ENCODE measurements at regions of chr20 and their contacts with region 1.

Region 1: GRCh38 chr20:50233721-50234135 is 43.1 kb downstream of the CEBPB start:
- DNase-seq: no peak
- H3K4me3 ChIP-seq: no peak overlapping the region
- H3K27ac ChIP-seq: no peak overlapping the region
- H3K4me1 ChIP-seq: peaks cover 14% of the 10 kb centered on the region
- H3K27me3 ChIP-seq: no peaks in the 10 kb centered on the region
- CTCF ChIP-seq: no peak

Region 2: GRCh38 chr20:50153485-50154377 is 80.0 kb before region 1 on chr20 and contains the start of gene PEDS1:
- CTCF ChIA-PET with region 1: no interaction called
- dilution Hi-C with region 1: no loop called
- in situ Hi-C with region 1: no loop called
- intact Hi-C with region 1: no loop called
- DNase-seq: peak; percentile 91
- H3K4me3 ChIP-seq: peak within 1 kb of the TSS; percentile 80 to 94 (median 90)
- H3K27ac ChIP-seq: peak within 1 kb of the TSS; percentile 89
- H3K4me1 ChIP-seq: peaks cover 39% of the 10 kb centered on the region
- H3K27me3 ChIP-seq: no peaks in the 10 kb centered on the region
- CTCF ChIP-seq: no peak
- total RNA-seq, gene PEDS1: 28.8 to 29.5 TPM

Region 3: DNA sequence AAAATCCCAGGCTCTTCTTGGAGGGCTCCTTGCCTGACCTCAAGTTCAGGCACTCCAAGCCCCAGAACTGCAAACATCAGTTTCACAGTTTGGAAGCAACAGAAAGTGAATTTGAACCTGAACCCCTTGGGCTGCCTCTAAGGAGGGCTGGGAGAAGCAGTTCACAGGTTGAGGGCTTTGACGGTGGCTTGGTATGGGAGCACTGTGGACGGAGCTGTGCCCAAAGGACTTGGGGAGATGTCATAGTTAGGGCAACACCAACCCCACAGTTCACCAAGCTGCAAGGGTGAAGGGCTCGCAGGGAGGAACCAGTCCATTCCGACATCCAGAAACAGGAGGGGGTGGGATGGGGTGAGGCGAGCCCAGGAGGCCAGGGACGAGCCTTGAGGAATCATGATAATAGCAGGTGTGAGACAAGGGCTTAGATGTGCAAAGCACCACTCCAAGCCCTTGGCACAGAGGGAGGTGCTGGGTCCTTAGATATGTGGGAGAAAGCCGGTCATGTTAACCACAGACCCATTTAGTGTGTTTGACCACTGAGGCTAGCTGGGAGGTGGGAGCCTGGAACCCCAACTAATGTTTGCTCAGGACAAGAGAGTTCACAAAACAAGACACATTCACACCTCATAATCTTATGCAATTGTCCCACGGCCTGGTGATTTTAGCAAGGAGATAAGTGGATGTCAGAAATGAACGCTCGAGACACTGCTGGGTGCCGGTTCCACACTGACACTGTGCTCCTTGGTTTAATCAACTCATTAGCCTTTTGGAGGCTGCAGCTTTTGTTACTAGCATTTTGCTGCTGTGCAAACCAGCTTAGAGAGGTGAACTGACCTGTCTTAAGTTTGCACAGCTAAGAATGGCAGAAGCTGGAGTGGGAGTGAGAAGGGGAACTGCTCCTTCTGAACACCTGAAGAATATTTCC is 38.6 kb before region 1 on chr20:
- CTCF ChIA-PET with region 1: no interaction called
- dilution Hi-C with region 1: loop called (anchors 5 kb)
- in situ Hi-C with region 1: no loop called
- intact Hi-C with region 1: no loop called
- DNase-seq: peak; percentile 46
- H3K4me3 ChIP-seq: no peak overlapping the region
- H3K27ac ChIP-seq: no peak overlapping the region
- H3K4me1 ChIP-seq: peaks cover 8% of the 10 kb centered on the region
- H3K27me3 ChIP-seq: no peaks in the 10 kb centered on the region
- CTCF ChIP-seq: no peak

Measured in mammary epithelial cell (primary cell).